A549 (cell line): ENCODE measurements at regions of chr10 and their contacts with region 1.

Region 1: GRCh38 chr10:7687228-7687907 is 15.7 kb upstream of the ITIH2 start:
- DNase-seq: peak; percentile 74 to 94
- ATAC-seq: peak; percentile 95 to 99
- H3K4me3 ChIP-seq: no peak overlapping the region
- H3K27ac ChIP-seq: peak overlapping the region in 1 of 2 experiments; percentile 3; a peak in 1 of 6 replicates
- H3K4me1 ChIP-seq: 0 out of 3 replicates have a peak, but pooled peaks cover 4% of the 10 kb centered on the region
- CTCF ChIP-seq: peak; percentile 94
- EP300 ChIP-seq: no peak
- POLR2A ChIP-seq: no peak
- RAD21 ChIP-seq: peak; percentile 89 to 93

Region 2: GRCh38 chr10:7488418-7488829 is 198.9 kb before region 1 on chr10:
- CTCF ChIA-PET with region 1: no interaction called
- POLR2A ChIA-PET with region 1: no interaction called
- DNase-seq: peak in 1 of 2 experiments; percentile 34
- ATAC-seq: no peak
- H3K4me3 ChIP-seq: no peak overlapping the region
- H3K27ac ChIP-seq: no peak overlapping the region
- H3K4me1 ChIP-seq: 0 out of 3 replicates have a peak, but pooled peaks cover 6% of the 10 kb centered on the region
- CTCF ChIP-seq: no peak
- EP300 ChIP-seq: no peak
- POLR2A ChIP-seq: no peak
- RAD21 ChIP-seq: no peak

Region 3: GRCh38 chr10:7666253-7667081 is 20.9 kb before region 1 on chr10 and contains the start of gene ITIH5:
- CTCF ChIA-PET with region 1: interaction called, 16 read pairs
- POLR2A ChIA-PET with region 1: no interaction called
- DNase-seq: no peak
- ATAC-seq: peak; percentile 36 to 69; a peak in 3 of 6 replicates
- H3K4me3 ChIP-seq: peak within 1 kb of the TSS; percentile 62
- H3K27ac ChIP-seq: peak within 1 kb of the TSS in 1 of 2 experiments; percentile 72; a peak in 3 of 6 replicates
- H3K4me1 ChIP-seq: no peaks in the 10 kb centered on the region
- CTCF ChIP-seq: no peak
- EP300 ChIP-seq: no peak
- POLR2A ChIP-seq: no peak
- RAD21 ChIP-seq: no peak
- polyA plus RNA-seq, gene ITIH5: 0.05 and 0.09 TPM in 2 replicates

Region 4: DNA sequence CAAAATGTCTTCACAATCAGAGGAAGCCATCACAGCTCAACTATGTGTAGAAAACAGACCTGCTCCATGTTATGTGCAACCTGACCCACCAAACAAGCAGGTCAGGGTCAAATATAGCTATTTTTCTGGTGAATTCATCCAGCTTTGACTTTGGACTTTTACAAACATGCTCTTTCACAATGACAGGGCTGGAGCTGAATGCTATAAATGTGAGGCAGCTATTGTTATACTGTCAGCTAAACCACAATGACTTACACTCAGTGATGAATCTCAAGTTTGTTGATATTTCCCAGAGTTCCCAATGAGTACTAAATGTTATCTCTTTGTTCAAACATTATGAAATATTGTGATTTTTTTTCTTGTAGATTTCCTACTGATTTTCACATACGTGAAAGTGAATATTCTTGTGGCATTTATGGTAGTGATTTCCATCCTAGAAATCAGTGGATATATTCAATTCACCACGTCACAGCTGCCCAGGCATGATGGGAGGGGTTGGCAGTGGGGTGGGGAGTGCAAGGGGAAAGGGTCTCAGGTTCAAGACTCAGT is 13.3 kb after region 1 on chr10:
- CTCF ChIA-PET with region 1: interaction called, 37 read pairs
- POLR2A ChIA-PET with region 1: no interaction called
- DNase-seq: peak; percentile 26 to 76
- ATAC-seq: peak; percentile 74 to 84; a peak in 5 of 6 replicates
- H3K4me3 ChIP-seq: no peak overlapping the region
- H3K27ac ChIP-seq: peak overlapping the region; percentile 71
- H3K4me1 ChIP-seq: peaks cover 17% of the 10 kb centered on the region; the same call in 2 of the 3 replicates
- CTCF ChIP-seq: no peak
- EP300 ChIP-seq: peak; percentile 48 to 56; a peak in 3 of 5 replicates
- POLR2A ChIP-seq: no peak
- RAD21 ChIP-seq: no peak

Region 5: DNA sequence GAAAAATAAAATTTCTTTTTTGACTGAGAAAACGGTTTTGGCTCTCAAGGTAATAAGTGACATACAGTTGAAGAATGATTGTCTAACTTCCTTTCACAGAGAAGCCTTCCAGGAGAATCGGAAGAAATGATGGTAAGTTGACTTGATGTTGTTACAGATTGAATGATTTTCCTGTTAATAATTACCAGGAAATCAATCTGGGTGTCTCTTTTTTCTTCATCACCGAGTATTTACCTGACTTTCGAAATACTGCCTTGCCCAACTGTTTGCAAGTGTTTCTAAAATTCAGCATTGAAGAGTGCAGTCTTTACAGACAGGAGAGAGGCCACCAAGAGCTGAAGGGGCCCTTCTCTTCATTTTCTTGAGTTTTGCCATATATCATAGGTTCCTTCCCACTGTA is 19.7 kb after region 1 on chr10:
- CTCF ChIA-PET with region 1: interaction called, 27 read pairs
- POLR2A ChIA-PET with region 1: no interaction called
- DNase-seq: peak in 1 of 2 experiments; percentile 39
- ATAC-seq: no peak
- H3K4me3 ChIP-seq: no peak overlapping the region
- H3K27ac ChIP-seq: peak overlapping the region; percentile 61 to 70; a peak in 5 of 6 replicates
- H3K4me1 ChIP-seq: peaks cover 14% of the 10 kb centered on the region; the same call in 2 of the 3 replicates
- CTCF ChIP-seq: no peak
- EP300 ChIP-seq: peak in 1 of 2 experiments; percentile 56; a peak in 2 of 5 replicates
- POLR2A ChIP-seq: no peak
- RAD21 ChIP-seq: no peak

Region 6: DNA sequence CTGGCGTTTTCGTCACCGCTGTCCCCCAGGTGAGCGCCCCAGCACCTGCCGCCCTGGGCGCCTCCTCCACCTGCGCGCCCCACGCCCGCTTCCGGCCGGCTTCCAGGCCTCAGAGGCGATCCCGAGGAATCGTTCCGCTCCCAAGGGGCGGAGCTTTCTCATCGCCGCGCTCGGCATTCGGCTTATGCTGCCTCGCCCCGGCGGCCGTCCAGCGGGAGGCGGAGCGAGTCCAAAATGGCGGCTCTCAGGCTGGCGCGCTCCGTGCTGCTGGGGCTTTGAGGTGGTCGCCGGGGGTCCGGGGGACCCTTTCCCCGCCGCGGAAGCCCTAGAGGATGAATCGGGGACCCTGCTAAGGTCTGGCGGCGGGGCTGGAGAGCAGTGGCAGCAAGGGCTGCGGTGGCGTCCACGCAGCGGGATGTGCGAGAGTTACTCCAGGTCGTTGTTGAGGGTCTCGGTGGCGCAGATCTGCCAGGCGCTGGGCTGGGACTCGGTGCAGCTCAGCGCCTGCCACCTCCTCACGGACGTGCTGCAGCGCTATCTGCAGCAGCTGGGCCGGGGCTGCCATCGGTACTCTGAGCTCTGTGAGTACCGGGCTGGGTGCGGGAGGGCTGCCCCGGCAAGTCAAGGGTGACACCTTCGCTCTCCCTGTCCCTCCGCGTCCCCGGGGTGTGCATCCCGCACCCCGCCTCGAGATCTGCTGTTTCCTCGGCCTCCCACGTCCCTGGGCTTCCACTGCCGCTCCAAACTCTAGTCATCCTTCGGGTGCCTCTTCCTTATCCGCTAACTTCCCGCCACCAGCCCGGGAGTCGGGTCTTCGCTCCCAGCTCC is 131.1 kb after region 1 on chr10 and contains the start of gene TAF3:
- CTCF ChIA-PET with region 1: interaction called, 17 read pairs
- POLR2A ChIA-PET with region 1: no interaction called
- DNase-seq: peak; percentile 49 to 88
- ATAC-seq: peak; percentile 65 to 89
- H3K4me3 ChIP-seq: peak within 1 kb of the TSS; percentile 84
- H3K27ac ChIP-seq: peak within 1 kb of the TSS; percentile 83 to 93
- H3K4me1 ChIP-seq: peaks cover 12% of the 10 kb centered on the region; the same call in 2 of the 3 replicates
- CTCF ChIP-seq: no peak
- EP300 ChIP-seq: no peak
- POLR2A ChIP-seq: peak; percentile 88
- RAD21 ChIP-seq: no peak
- polyA plus RNA-seq, gene TAF3: 4.7 and 6.1 TPM in 2 replicates